Activated naive CD4-positive, alpha-beta T cell treated with anti-CD3 and anti-CD28 coated beads for 36 hours (primary cell): ENCODE measurements at regions of chr2 and their contacts with region 1.

Region 1: DNA sequence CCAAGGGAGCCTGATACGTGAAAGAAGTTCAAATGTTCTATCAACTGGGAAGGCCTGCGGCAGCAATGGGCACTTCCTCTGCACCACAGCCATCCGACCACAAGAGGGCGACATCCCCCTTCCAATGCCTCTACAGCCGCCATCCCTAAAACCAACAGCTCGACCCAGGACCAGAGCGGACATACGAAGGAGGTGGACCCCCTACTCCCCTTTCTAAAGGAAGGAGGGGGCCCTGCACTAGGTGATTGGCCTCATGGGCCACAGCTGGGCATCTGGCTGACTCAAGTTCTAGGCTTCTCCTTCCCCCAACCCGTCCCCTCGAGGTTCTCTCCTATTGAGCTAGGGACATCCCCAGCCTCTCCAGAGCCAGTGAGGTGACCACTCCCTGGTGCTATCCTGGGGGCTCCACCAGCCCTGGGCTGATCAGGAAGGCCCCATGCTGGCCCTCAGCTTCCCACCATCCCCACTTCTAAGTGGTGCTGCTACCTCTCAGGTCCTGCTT is 217.2 kb downstream of the TNS1 start:
- DNase-seq: peak; percentile 88
- H3K4me3 Mint-ChIP-seq: no peak overlapping the region
- H3K27ac Mint-ChIP-seq: peak overlapping the region; percentile 51
- H3K4me1 Mint-ChIP-seq: peaks cover 13% of the 10 kb centered on the region
- H3K27me3 Mint-ChIP-seq: peaks cover 2% of the 10 kb centered on the region

Region 2: DNA sequence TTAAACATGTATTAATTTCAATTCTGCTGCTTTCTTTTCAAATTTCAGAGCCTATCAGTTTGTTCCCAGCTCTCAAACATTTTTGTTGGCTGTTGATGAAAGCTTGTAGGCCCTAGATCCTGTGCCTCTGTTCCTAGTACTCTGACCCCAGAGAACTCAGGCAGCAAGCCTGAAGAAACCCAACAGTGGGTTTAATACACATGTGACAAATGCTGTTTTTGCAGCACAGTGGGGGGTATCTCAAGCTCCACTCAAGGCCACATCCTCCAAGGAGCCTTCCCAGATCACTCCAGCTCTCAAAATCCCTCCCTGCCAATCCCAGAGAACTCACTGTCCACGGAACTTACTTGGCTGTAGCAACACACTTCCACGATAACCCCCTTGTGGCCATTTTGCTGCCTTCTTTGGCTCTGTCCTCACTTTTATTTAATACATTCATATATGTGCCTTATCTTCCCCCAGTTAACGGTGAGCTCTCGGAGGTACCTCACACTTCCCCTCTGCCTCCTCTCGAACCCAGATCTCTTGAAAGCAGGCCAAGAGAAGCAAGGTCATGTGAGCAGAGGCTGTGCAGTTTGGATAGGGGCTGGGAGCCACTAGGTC is 94.8 kb after region 1 on chr2:
- CTCF ChIA-PET with region 1: interaction called, 231 read pairs
- intact Hi-C with region 1: no loop called
- DNase-seq: no peak
- H3K4me3 Mint-ChIP-seq: no peak overlapping the region
- H3K27ac Mint-ChIP-seq: no peak overlapping the region
- H3K4me1 Mint-ChIP-seq: no peaks in the 10 kb centered on the region
- H3K27me3 Mint-ChIP-seq: no peaks in the 10 kb centered on the region

Region 3: GRCh38 chr2:217988014-217988839 is 202.6 kb after region 1 on chr2:
- CTCF ChIA-PET with region 1: interaction called, 103 read pairs
- intact Hi-C with region 1: loop called (anchors 1 kb)
- DNase-seq: peak; percentile 85
- H3K4me3 Mint-ChIP-seq: no peak overlapping the region
- H3K27ac Mint-ChIP-seq: no peak overlapping the region
- H3K4me1 Mint-ChIP-seq: no peaks in the 10 kb centered on the region
- H3K27me3 Mint-ChIP-seq: no peaks in the 10 kb centered on the region

Region 4: GRCh38 chr2:218039171-218039570 is 253.6 kb after region 1 on chr2:
- CTCF ChIA-PET with region 1: interaction called, 15 read pairs
- intact Hi-C with region 1: loop called (anchors 1 kb)
- DNase-seq: no peak
- H3K4me3 Mint-ChIP-seq: no peak overlapping the region
- H3K27ac Mint-ChIP-seq: no peak overlapping the region
- H3K4me1 Mint-ChIP-seq: peaks cover 10% of the 10 kb centered on the region
- H3K27me3 Mint-ChIP-seq: peaks cover 2% of the 10 kb centered on the region

Region 5: DNA sequence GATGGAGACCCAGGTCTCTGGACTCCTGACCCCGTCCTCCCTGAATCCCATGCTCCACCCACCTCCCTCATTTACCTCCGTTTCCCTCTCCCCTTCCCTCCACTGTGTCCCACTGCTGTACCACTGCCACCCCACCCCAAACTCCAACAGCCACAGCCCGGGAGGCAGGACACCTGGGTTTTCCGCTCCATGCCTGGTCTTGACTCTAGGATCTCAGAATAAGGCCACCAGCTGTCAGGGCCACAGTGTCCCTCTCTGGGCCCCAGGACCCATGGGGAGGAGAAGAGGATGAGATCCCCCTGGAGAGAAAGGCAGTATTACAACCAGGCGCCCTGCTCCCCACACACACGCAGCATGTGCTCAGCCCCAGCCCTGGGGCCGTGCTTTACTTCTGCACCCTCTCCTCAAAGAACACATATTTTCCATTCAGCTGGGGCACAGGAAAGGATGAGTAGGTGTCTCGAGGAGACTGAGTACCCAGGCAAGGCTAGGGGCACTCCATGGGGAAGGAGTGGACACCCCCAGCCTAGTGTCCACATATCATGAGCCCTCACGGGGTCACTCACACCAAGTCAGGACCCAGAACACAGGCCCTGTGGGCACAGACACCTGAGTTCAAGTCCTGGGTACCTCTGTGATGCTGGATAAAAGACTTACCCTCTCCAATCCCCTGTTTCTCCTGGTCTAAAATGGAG is 284.2 kb after region 1 on chr2:
- CTCF ChIA-PET with region 1: interaction called, 14 read pairs
- intact Hi-C with region 1: loop called (anchors 1 kb)
- DNase-seq: no peak
- H3K4me3 Mint-ChIP-seq: no peak overlapping the region
- H3K27ac Mint-ChIP-seq: no peak overlapping the region
- H3K4me1 Mint-ChIP-seq: peaks cover 6% of the 10 kb centered on the region
- H3K27me3 Mint-ChIP-seq: peaks cover 6% of the 10 kb centered on the region

Region 6: GRCh38 chr2:218097975-218098374 is 312.4 kb after region 1 on chr2:
- CTCF ChIA-PET with region 1: no interaction called
- intact Hi-C with region 1: no loop called
- DNase-seq: no peak
- H3K4me3 Mint-ChIP-seq: no peak overlapping the region
- H3K27ac Mint-ChIP-seq: no peak overlapping the region
- H3K4me1 Mint-ChIP-seq: no peaks in the 10 kb centered on the region
- H3K27me3 Mint-ChIP-seq: no peaks in the 10 kb centered on the region